ENCODE measurements at regions of chr4 and their contacts with region 1.

Region 1: DNA sequence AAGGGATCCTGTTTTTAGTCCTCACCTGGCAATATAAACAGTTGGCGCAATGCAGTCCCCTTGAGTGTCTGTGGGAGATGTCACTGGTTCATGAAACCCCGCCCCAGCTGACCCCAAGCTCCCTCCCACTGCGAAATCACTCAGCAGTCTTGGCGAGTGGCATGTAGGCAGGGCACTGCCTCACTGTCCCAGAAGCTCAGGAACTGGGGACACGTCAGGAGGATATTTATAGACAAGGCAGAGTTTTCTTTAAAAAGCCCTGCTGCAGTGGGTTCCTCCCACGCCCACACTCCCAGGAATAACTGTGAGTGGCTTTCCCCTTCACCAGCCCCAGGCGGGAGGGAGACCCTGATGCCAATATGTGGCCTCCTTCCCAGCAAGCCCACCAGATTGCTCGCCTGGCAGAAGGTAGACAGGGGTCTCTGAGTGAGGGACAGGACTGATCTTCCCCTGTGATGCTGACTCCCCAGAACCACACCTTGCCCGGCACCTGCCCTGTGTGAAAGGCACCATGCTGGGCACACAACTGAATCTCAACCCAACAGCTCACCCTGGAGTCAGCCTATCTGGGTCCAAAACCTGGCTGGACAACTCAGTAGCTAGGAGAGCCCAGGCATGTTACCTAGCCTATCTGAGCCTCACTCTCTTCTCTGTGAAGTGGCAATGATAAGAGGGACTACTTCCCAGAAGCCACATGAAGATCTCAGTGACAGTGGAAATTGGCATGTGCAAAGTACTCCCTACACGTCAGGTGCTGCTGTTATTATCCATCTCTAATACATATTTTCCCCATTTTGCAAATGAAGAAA is 44.6 kb upstream of the PPP2R2C start:
- DNase-seq: no peak
- H3K4me3 ChIP-seq: no peak overlapping the region
- H3K27ac ChIP-seq: no peak overlapping the region
- H3K4me1 ChIP-seq: no peaks in the 10 kb centered on the region
- H3K27me3 ChIP-seq: no peaks in the 10 kb centered on the region
- CTCF ChIP-seq: no peak
- POLR2A ChIP-seq: no peak

Region 2: DNA sequence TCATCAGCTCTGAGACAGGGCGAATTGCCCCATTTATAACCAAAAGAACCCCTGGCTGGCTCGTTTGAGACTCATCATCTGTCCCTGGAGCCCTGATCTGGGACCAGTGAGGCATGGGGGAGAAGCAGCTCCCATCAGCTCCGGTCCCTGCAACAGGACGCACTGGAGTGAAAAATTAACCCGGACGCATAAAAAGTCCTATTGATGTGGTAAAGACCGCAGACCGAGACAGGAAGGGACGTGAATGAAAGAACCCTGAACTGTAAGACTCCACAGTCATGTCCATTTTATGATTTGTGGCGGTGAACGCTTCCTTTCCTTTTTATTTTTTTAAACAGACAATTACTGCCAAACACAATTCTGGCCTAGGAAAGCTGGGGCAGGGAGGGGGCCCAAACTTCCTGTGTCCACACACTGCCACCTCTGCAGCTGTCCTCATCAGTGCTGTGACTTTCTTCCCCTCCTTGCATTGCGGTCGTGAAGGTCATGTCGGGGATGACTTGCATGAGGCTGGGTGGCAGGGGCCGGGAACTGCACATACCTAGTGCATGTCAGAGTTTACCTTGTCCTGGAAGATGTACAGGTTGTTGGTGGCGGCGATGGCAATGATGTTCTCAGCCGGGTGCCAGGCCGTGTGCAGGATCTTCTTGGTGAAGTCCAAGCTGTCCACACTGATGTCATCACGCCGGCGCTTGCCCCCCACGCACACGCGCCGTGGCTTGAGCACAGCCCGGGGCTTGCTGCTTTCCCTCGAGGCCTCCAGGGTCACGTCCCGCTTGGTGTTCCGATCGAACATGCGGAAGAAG is 194.0 kb before region 1 on chr4:
- intact Hi-C with region 1: no loop called
- DNase-seq: no peak
- H3K4me3 ChIP-seq: no peak overlapping the region
- H3K27ac ChIP-seq: no peak overlapping the region
- H3K4me1 ChIP-seq: no peaks in the 10 kb centered on the region
- H3K27me3 ChIP-seq: peaks cover 0 to 5% of the 10 kb centered on the region in 2 donors
- CTCF ChIP-seq: no peak
- POLR2A ChIP-seq: no peak

Region 3: DNA sequence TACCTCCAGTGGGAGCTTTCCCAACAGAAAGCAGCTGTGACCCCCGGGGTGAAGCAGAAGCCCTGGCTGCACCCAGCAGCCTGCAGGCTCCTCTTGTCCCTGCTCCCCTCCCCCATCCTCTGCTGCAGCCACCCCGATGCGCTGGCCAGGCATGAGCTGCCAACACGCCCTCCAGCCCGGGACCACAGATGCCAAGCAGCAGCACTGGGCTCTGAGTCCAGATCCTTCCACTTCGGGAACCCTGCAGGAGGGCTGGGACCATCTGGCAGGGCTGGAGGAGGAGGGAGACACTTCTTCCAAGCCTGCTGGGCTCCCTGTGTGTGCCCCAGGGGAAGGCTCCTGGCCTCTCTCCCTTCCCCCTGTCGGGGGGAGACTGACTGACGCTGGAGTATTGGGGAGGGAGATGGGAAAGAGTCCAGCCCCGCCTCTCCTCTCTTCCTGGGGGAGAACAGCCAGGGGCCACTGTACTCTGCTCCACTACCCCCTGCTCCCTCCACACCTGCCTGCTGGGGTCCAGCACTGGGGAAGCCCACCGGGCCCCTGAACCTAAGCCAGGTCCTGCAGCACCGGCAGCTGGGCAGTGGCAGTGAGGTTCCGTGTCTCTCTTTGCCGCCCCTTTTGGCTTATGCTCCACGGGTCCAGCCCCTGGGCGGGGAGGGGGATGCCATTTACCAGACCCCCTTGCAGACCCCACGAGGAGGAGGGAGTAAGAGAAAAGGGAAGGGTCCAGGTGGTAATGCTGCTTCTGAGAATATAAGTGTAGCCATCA is 100.3 kb before region 1 on chr4:
- intact Hi-C with region 1: loop called (anchors 2 kb)
- DNase-seq: no peak
- H3K4me3 ChIP-seq: no peak overlapping the region
- H3K27ac ChIP-seq: no peak overlapping the region
- H3K4me1 ChIP-seq: no peaks in the 10 kb centered on the region
- H3K27me3 ChIP-seq: peaks cover 0 to 11% of the 10 kb centered on the region in 2 donors
- CTCF ChIP-seq: no peak
- POLR2A ChIP-seq: no peak